ENCODE measurements at regions of chr1 and their contacts with region 1.

Region 1: GRCh38 chr1:16078925-16079656 is 5.6 kb upstream of the FAM131C start:
- DNase-seq: no peak
- H3K4me3 ChIP-seq: no peak overlapping the region
- H3K27ac ChIP-seq: peak overlapping the region; percentile 21
- H3K4me1 ChIP-seq: peaks cover 58% of the 10 kb centered on the region
- H3K27me3 ChIP-seq: no peaks in the 10 kb centered on the region
- CTCF ChIP-seq: peak; percentile 94 to 97 (median 97)
- POLR2A ChIP-seq: no peak

Region 2: DNA sequence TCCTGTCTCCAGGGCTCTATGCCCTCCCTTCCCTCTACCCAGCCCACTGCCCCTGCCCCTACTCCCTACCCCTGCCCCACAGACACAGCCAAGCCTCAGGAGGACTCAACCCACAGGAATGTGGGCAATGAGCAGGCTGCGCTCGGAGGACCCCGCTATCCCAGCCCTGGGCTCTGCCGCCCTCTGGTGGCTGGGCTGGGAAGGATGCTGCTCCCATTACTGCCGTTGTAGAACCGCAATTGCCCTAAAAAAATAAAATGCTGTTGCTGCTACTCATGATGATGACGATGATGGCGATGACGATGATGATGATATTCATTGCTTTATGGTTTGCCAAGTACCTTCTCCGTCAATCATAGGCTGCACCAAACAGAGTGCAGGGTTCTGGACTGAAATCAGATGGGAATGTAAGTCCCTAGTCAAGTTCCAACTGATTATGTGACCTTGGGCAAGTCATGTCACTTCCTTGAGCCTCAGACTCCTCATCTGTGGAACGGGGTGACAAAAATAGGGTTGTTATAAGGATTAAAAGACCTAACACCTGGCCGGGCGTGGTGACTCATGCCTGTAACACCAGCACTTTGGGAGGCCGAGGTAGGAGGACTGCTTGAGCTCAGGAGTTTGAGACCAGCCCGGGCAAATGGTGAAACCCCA is 108.8 kb after region 1 on chr1:
- intact Hi-C with region 1: loop called (anchors 2 kb)
- DNase-seq: no peak
- H3K4me3 ChIP-seq: no peak overlapping the region
- H3K27ac ChIP-seq: peak overlapping the region; percentile 65
- H3K4me1 ChIP-seq: peaks cover 54% of the 10 kb centered on the region
- H3K27me3 ChIP-seq: no peaks in the 10 kb centered on the region
- CTCF ChIP-seq: peak; percentile 92 to 97 (median 97)
- POLR2A ChIP-seq: no peak

Region 3: DNA sequence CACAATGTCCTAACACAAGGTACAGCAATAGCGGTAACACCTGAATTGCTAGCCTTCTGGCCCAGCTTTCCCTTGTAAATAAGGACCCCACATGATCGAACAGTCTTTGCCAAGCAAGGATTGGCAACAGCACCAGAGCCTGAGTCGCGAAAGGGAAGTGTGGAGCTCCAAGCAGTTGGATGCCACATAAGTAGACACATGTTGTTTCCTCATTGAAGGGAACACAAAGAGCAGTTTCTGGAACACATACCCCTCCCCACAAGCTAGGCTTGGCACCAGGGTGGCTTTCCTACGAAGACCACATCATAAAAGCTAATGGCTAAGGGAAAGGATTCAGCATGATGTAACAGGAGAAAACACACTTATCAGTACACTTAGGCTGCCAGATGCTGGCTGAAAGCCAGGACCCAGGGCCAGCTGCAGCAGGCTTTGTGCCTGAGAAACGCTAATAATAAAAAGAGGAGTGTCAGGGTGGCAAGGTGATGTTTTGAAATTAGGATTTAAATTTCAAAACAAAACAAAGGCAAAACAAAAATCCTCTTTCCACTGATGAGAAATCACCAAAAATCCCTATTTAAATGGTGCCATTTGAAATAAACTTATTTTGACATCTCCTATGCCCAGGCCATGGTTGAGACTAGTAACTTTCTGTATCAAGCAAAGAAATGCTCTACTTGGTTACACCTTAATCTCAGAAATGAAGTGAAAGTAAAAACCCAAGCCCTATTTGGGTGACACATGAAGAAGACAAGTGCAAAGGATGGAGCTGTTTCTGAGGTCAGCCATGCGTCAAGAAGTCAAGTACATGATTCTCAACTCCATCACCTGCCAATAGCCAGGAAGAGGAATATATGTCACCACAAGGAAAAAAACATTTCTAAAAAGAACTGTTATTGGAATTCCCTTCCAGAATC is 169.8 kb after region 1 on chr1:
- intact Hi-C with region 1: loop called (anchors 5 kb)
- DNase-seq: peak in 1 of 2 donors; percentile 94
- H3K4me3 ChIP-seq: no peak overlapping the region
- H3K27ac ChIP-seq: peak overlapping the region; percentile 87
- H3K4me1 ChIP-seq: peaks cover 55% of the 10 kb centered on the region
- H3K27me3 ChIP-seq: no peaks in the 10 kb centered on the region
- CTCF ChIP-seq: no peak
- POLR2A ChIP-seq: no peak

Region 4: GRCh38 chr1:16351994-16352841 is 273.1 kb after region 1 on chr1 and contains the start of gene FBXO42:
- intact Hi-C with region 1: no loop called
- DNase-seq: no peak
- H3K4me3 ChIP-seq: peak within 1 kb of the TSS; percentile 85 to 88
- H3K27ac ChIP-seq: peak within 1 kb of the TSS; percentile 94
- H3K4me1 ChIP-seq: peaks cover 37% of the 10 kb centered on the region
- H3K27me3 ChIP-seq: no peaks in the 10 kb centered on the region
- CTCF ChIP-seq: peak in 2 of 3 experiments; percentile 13 to 26
- POLR2A ChIP-seq: peak; percentile 60 to 94
- total RNA-seq, gene FBXO42: 24.8 TPM

Region 5: DNA sequence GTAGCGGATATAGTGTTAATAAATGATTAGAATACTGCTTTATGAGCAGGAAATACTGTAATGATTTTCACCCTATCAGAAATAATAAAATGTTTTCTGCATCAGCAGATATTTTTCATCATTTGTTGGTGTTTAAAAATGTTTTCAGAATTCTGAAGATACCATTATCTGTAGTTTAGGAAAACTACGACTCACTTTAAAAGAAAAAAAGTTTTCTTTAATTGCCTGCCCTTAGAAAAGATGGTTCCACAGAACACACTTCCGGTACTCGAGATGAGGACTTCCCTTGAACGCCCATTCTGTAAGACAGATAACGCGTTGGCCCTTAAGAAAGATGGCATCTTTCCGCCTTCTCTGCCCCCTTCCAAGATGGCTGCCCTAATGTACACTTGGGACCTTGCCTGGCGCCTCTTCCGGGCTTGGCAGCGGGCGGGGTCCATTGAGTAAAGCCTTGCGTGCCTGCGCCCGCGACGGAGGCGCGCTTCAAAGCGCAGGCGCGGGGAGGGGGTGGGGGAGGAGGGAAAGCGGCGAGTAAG is 287.7 kb after region 1 on chr1 and contains the start of gene SZRD1:
- intact Hi-C with region 1: loop called (anchors 10 kb)
- DNase-seq: peak; percentile 98 to 99
- H3K4me3 ChIP-seq: peak within 1 kb of the TSS; percentile 83 to 92
- H3K27ac ChIP-seq: peak within 1 kb of the TSS; percentile 96
- H3K4me1 ChIP-seq: peaks cover 38% of the 10 kb centered on the region
- H3K27me3 ChIP-seq: no peaks in the 10 kb centered on the region
- CTCF ChIP-seq: no peak
- POLR2A ChIP-seq: no peak
- total RNA-seq, gene SZRD1: 52.3 TPM